BJ (cell line): ENCODE measurements at regions of chr1 and their contacts with region 1.

Region 1: GRCh38 chr1:8962812-8963530 is 17.3 kb downstream of the CA6 start:
- DNase-seq: no peak
- H3K4me3 ChIP-seq: no peak overlapping the region
- H3K27me3 ChIP-seq: peaks cover 2% of the 10 kb centered on the region; the same call in 1 of the 2 replicates
- CTCF ChIP-seq: peak; percentile 63

Region 2: DNA sequence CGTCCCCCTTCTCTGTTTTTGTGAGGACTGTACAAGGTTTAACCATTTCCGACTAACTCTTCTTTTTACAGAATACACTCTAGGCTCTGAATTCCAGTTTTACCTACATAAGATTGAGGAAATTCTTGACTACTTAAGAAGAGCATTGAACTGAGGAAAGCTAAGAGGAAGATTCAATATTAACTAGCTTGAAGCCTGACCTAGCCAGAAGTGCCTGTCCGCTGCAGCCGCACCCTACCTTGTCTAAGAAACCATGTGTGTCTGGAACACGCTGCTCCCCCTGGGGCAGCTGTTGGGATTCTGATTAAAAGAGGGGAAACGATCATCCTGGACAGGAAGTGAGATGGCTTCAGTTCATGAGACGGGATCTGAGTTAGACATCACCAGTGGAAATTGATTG is 11.6 kb after region 1 on chr1:
- CTCF ChIA-PET with region 1: interaction called, 16 read pairs
- POLR2A ChIA-PET with region 1: no interaction called
- DNase-seq: no peak
- H3K4me3 ChIP-seq: no peak overlapping the region
- H3K27me3 ChIP-seq: no peaks in the 10 kb centered on the region
- CTCF ChIP-seq: no peak